ENCODE measurements at regions of chr6 and their contacts with region 1.

Region 1: GRCh38 chr6:136792410-136793262 is at the start of gene MAP3K5:
- DNase-seq: peak; percentile 81
- ATAC-seq: peak; percentile 73
- H3K4me3 ChIP-seq: peak within 1 kb of the TSS; percentile 81
- H3K27ac ChIP-seq: peak within 1 kb of the TSS; percentile 79
- H3K4me1 ChIP-seq: peaks cover 22% of the 10 kb centered on the region
- H3K27me3 ChIP-seq: no peaks in the 10 kb centered on the region
- CTCF ChIP-seq: peak; percentile 68
- total RNA-seq, gene MAP3K5: 4.3 and 5.0 TPM in 2 replicates

Region 2: DNA sequence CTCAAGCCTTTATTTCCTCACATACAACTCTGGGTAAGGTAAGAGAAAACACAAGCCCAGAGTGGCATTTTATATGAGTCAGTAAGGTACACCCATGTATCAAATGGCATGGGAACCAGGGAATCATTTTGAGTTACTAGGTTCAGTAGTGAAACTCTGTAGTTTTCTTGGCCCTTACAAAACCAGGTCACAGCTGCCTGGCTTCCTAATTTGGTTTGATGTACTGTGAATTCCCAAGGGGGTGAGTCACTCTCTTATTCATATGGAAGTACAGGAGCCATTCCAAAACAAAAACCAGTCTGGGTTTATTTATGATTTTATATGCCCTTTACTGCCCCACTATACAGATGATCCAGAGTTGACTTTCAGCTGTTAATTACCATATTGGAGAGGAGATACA is 870.5 kb before region 1 on chr6:
- CTCF ChIA-PET with region 1: no interaction called
- POLR2A ChIA-PET with region 1: no interaction called
- intact Hi-C with region 1: no loop called
- DNase-seq: peak; percentile 93
- ATAC-seq: peak; percentile 96
- H3K4me3 ChIP-seq: no peak overlapping the region
- H3K27ac ChIP-seq: peak overlapping the region; percentile 89
- H3K4me1 ChIP-seq: peaks cover 21% of the 10 kb centered on the region
- H3K27me3 ChIP-seq: no peaks in the 10 kb centered on the region
- CTCF ChIP-seq: no peak

Region 3: DNA sequence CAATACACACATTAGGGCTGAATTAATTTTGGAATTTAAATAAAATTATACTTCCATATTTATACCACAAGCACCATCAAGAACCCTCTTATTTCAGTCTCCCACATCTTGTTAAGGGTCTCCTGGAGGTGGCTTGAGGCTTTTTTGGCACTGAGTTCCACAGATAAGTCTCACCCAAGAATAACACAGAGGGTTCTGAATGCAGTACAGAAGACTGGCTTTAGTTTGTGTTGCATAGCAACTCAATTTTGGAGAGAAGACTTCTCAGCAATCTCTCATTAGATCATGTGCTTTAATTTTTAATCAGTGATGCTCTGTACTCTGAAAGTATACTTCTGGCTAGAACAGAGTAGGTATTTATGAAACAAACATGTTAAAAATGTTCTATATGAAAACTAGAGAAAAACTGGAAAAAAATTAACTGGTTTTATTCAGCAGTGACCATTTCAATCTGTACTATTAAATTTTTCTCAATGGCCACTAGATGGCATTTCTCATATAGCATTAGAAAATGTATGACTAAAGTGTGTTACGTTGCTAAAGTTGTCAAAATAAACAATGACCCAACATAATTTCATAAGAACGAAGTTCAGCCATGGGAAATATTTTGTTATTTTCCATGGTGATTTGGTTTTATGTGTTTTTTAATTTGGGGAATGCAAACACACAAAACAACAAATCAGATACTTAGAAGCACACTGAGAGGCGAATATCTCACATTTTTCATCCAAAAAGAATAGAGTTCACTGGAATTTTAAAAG is 209.7 kb before region 1 on chr6:
- CTCF ChIA-PET with region 1: no interaction called
- POLR2A ChIA-PET with region 1: interaction called, 3 read pairs
- intact Hi-C with region 1: loop called (anchors 1 kb)
- DNase-seq: peak; percentile 81
- ATAC-seq: peak; percentile 48
- H3K4me3 ChIP-seq: no peak overlapping the region
- H3K27ac ChIP-seq: peak overlapping the region; percentile 80
- H3K4me1 ChIP-seq: peaks cover 6% of the 10 kb centered on the region
- H3K27me3 ChIP-seq: no peaks in the 10 kb centered on the region
- CTCF ChIP-seq: peak; percentile 70

Region 4: GRCh38 chr6:136607932-136608772 is 184.5 kb before region 1 on chr6:
- CTCF ChIA-PET with region 1: interaction called, 12 read pairs
- POLR2A ChIA-PET with region 1: no interaction called
- intact Hi-C with region 1: no loop called
- DNase-seq: peak; percentile 76
- ATAC-seq: no peak
- H3K4me3 ChIP-seq: no peak overlapping the region
- H3K27ac ChIP-seq: peak overlapping the region; percentile 97
- H3K4me1 ChIP-seq: peaks cover 43% of the 10 kb centered on the region
- H3K27me3 ChIP-seq: no peaks in the 10 kb centered on the region
- CTCF ChIP-seq: peak; percentile 73

Region 5: DNA sequence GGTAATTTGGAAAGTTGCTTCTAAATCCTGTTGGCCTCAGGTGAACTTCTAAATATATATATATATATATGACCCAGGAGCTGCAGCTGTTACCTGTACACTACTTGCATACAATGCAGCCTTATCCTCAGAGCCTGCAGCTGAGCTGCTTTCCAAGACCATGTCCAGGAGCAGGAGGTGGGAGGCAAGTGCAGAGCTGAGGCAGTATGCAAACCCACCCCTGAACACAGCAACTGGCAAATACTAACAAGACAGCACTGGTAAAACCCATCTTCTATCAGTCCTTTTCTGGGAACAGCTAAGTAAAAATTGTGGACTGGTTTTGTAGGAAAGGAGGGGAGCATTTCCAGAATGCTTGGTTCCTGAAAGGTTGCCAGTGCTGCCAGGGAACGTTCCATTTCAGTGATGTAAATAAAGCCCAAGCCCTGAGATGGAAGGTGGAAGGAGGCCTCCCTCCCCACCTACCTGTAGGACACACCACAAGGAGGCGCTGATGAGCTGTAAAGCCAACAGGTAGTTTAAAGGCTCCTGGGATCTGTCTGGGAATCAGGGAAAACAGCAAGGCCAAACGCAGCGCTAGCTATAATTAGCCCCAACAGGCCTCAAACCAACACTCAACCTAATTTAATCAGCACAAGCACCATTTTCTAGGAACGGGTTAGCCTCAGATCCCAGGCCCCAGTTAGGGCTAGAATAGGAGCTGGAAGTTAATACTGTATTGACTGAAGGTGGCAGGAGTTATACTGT is 148.6 kb before region 1 on chr6:
- CTCF ChIA-PET with region 1: interaction called, 119 read pairs
- POLR2A ChIA-PET with region 1: interaction called, 23 read pairs
- intact Hi-C with region 1: loop called (anchors 1 kb)
- DNase-seq: peak; percentile 88
- ATAC-seq: peak; percentile 99
- H3K4me3 ChIP-seq: no peak overlapping the region
- H3K27ac ChIP-seq: peak overlapping the region; percentile 48
- H3K4me1 ChIP-seq: peaks cover 12% of the 10 kb centered on the region; the same call in 1 of the 2 replicates
- H3K27me3 ChIP-seq: no peaks in the 10 kb centered on the region
- CTCF ChIP-seq: peak; percentile 89

Region 6: DNA sequence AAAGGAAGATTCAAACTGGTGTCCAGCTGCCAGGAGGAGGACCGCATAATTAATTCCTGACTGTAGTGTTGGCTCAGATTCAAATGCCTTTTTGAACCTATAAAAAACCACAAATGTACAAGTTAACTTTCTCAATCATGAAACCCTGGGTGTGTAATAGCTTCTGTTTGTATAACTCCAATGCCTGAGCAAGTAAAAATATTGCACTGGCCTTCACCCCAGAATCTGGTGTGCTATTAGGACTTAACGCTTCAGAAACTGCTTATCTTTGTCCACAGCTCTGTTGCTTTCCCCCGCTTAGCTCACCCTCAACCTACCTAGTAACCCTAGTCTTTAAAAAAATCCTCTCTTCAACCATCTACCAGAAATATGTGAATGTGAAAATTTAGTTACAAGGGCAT is 123.3 kb before region 1 on chr6:
- CTCF ChIA-PET with region 1: interaction called, 12 read pairs
- POLR2A ChIA-PET with region 1: no interaction called
- intact Hi-C with region 1: loop called (anchors 5 kb)
- DNase-seq: peak; percentile 85
- ATAC-seq: peak; percentile 88
- H3K4me3 ChIP-seq: peak overlapping the region; percentile 32; the same call in 1 of the 2 replicates
- H3K27ac ChIP-seq: peak overlapping the region; percentile 59
- H3K4me1 ChIP-seq: peaks cover 30% of the 10 kb centered on the region
- H3K27me3 ChIP-seq: no peaks in the 10 kb centered on the region
- CTCF ChIP-seq: no peak

Region 7: GRCh38 chr6:136932599-136932998 is 140.0 kb after region 1 on chr6:
- CTCF ChIA-PET with region 1: no interaction called
- POLR2A ChIA-PET with region 1: no interaction called
- intact Hi-C with region 1: no loop called
- DNase-seq: no peak
- ATAC-seq: no peak
- H3K4me3 ChIP-seq: no peak overlapping the region
- H3K27ac ChIP-seq: no peak overlapping the region
- H3K4me1 ChIP-seq: no peaks in the 10 kb centered on the region
- H3K27me3 ChIP-seq: no peaks in the 10 kb centered on the region
- CTCF ChIP-seq: no peak

Measured in PC-3 (cell line).